B cell (primary cell): ENCODE measurements at regions of chr2 and their contacts with region 1.

Region 1: DNA sequence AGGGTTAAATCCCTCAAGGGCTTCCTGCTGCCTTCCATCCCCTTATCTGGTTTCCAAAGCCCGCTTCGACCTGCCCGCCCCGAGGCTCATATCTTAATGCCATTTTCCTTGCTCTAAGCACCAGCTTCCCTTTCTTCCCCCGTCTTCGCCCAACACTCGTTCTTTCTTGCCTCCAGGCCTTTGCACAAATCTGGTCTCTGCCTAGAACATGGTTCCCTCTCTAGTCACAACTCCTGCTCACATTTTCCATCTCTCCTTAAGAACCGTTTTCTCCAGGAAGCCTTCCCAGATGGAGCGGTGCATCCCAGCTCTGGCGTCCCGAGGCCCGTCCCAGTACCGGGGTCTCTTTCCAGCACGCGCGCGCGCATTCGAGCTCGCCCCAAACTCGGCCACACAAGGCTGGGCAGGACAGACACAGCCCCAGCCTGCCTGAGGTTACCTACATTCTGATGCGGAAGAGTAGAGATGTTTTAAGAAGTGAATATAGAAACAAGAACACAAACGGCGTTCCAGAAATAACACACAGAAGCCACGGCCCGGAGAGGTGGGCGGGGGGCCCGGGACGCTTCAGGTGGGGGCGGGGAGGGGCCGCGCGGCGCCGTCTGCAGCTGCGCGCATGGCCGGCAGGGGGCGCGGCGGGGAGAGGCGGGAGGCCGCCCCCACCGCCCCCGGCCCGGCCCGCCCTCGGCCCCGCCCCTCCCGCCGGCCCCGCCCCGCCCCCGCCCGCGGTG is at the start of gene DGKD:
- DNase-seq: peak; percentile 90
- ATAC-seq: peak; percentile 77
- H3K4me3 ChIP-seq: peak within 1 kb of the TSS; percentile 82 to 89 (median 83)
- H3K4me3 Mint-ChIP-seq: peak within 1 kb of the TSS; percentile 96
- H3K27ac ChIP-seq: peak within 1 kb of the TSS; percentile 89 to 97
- H3K27ac Mint-ChIP-seq: peak within 1 kb of the TSS; percentile 96
- H3K4me1 ChIP-seq: peaks cover 79 to 85% of the 10 kb centered on the region in 2 donors
- H3K4me1 Mint-ChIP-seq: peaks cover 86% of the 10 kb centered on the region
- H3K27me3 ChIP-seq: no peaks in the 10 kb centered on the region
- H3K27me3 Mint-ChIP-seq: no peaks in the 10 kb centered on the region
- CTCF ChIP-seq: peak; percentile 14
- total RNA-seq, gene DGKD: 396 and 397 TPM in 2 replicates

Region 2: DNA sequence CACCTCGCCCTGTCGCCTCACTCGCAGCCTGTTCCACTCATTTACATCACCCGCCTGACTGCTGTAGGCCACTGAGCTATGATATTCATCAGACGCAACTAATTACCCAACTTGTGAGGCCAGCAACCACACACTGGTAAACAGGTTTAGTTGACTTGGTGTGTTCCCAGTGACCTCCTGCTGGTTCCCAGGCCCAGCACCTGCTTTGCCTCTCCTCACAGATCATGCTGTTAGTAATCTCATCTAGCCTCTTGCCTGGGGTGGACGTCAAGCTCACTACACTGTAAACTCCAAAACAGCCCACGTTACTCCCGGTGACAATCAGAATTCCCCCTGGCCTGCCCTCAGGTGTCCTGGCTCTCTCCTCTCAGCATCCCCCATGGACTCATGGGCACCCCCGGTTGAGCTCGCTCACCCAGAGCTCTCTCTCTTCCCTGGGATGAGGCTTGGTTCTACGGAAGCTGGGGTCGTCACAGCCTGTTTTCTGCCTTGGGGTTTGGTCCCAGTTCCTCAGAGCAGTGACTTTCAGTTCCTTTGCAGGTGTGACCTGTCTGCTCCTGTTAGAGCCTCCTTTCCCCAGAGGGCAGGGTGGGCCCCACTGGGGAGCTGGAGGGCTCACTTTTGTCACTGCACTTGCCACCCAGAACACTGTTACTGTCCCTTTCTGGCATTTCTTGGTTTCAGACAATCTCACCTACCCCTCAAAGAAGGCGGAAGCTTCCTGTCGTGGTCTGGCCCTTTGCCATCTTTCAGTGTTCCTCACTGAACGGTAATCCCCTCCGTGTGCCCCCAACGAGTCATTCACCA is 253.5 kb before region 1 on chr2:
- CTCF ChIA-PET with region 1: no interaction called
- POLR2A ChIA-PET with region 1: no interaction called
- intact Hi-C with region 1: loop called (anchors 10 kb)
- DNase-seq: peak; percentile 93
- ATAC-seq: peak; percentile 86
- H3K4me3 ChIP-seq: peak overlapping the region in 4 of 5 experiments; percentile 18 to 55 (median 40)
- H3K4me3 Mint-ChIP-seq: peak overlapping the region; percentile 83
- H3K27ac ChIP-seq: peak overlapping the region; percentile 96 to 98
- H3K27ac Mint-ChIP-seq: peak overlapping the region; percentile 97
- H3K4me1 ChIP-seq: peaks cover 79 to 83% of the 10 kb centered on the region in 2 donors
- H3K4me1 Mint-ChIP-seq: peaks cover 80% of the 10 kb centered on the region
- H3K27me3 ChIP-seq: no peaks in the 10 kb centered on the region
- H3K27me3 Mint-ChIP-seq: no peaks in the 10 kb centered on the region
- CTCF ChIP-seq: no peak

Region 3: GRCh38 chr2:233323851-233324250 is 30.1 kb before region 1 on chr2:
- CTCF ChIA-PET with region 1: interaction called, 10 read pairs
- POLR2A ChIA-PET with region 1: interaction called, 10 read pairs
- intact Hi-C with region 1: loop called (anchors 5 kb)
- DNase-seq: no peak
- ATAC-seq: no peak
- H3K4me3 ChIP-seq: no peak overlapping the region
- H3K4me3 Mint-ChIP-seq: no peak overlapping the region
- H3K27ac ChIP-seq: no peak overlapping the region
- H3K27ac Mint-ChIP-seq: no peak overlapping the region
- H3K4me1 ChIP-seq: peaks cover 36 to 57% of the 10 kb centered on the region in 2 donors
- H3K4me1 Mint-ChIP-seq: peaks cover 50% of the 10 kb centered on the region
- H3K27me3 ChIP-seq: no peaks in the 10 kb centered on the region
- H3K27me3 Mint-ChIP-seq: no peaks in the 10 kb centered on the region
- CTCF ChIP-seq: no peak

Region 4: GRCh38 chr2:233371641-233372040 is 17.7 kb after region 1 on chr2:
- CTCF ChIA-PET with region 1: interaction called, 4 read pairs
- POLR2A ChIA-PET with region 1: interaction called, 6 read pairs
- intact Hi-C with region 1: loop called (anchors 2 kb)
- DNase-seq: no peak
- ATAC-seq: no peak
- H3K4me3 ChIP-seq: no peak overlapping the region
- H3K4me3 Mint-ChIP-seq: no peak overlapping the region
- H3K27ac ChIP-seq: peak overlapping the region in 1 of 2 donors; percentile 11
- H3K27ac Mint-ChIP-seq: no peak overlapping the region
- H3K4me1 ChIP-seq: peaks cover 58 to 66% of the 10 kb centered on the region in 2 donors
- H3K4me1 Mint-ChIP-seq: peaks cover 69% of the 10 kb centered on the region
- H3K27me3 ChIP-seq: no peaks in the 10 kb centered on the region
- H3K27me3 Mint-ChIP-seq: no peaks in the 10 kb centered on the region
- CTCF ChIP-seq: no peak

Region 5: DNA sequence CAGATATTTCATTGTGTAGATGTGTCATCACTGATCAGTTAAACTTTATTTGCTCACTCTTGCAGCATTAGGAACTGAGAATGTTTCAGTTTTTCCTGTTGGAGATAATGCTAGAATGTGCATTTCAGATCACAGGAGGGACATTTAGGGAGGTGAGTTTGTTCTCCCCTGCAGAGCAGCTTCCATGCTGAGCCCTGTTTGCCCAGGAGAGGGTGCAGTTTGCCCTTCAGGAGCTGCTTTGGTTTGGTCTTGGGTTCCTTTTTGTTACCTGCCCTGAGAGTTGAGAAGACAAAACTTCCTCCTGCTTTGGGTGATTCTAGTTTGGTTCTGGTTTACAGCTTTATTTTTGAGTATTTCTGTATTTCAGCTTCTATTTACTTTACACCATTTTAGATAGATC is 50.3 kb after region 1 on chr2:
- CTCF ChIA-PET with region 1: interaction called, 10 read pairs
- POLR2A ChIA-PET with region 1: no interaction called
- intact Hi-C with region 1: no loop called
- DNase-seq: peak; percentile 82
- ATAC-seq: peak; percentile 89
- H3K4me3 ChIP-seq: no peak overlapping the region
- H3K4me3 Mint-ChIP-seq: no peak overlapping the region
- H3K27ac ChIP-seq: peak overlapping the region in 1 of 2 donors; percentile 69
- H3K27ac Mint-ChIP-seq: peak overlapping the region; percentile 82
- H3K4me1 ChIP-seq: peaks cover 25 to 28% of the 10 kb centered on the region in 2 donors
- H3K4me1 Mint-ChIP-seq: peaks cover 46% of the 10 kb centered on the region
- H3K27me3 ChIP-seq: no peaks in the 10 kb centered on the region
- H3K27me3 Mint-ChIP-seq: no peaks in the 10 kb centered on the region
- CTCF ChIP-seq: peak; percentile 88

Region 6: GRCh38 chr2:233443468-233444183 is 89.7 kb after region 1 on chr2:
- CTCF ChIA-PET with region 1: interaction called, 24 read pairs
- POLR2A ChIA-PET with region 1: interaction called, 3 read pairs
- intact Hi-C with region 1: loop called (anchors 1 kb)
- DNase-seq: peak; percentile 85
- ATAC-seq: peak; percentile 84
- H3K4me3 ChIP-seq: no peak overlapping the region
- H3K4me3 Mint-ChIP-seq: no peak overlapping the region
- H3K27ac ChIP-seq: peak overlapping the region in 1 of 2 donors; percentile 28
- H3K27ac Mint-ChIP-seq: peak overlapping the region; percentile 80
- H3K4me1 ChIP-seq: peaks cover 5 to 8% of the 10 kb centered on the region in 2 donors
- H3K4me1 Mint-ChIP-seq: peaks cover 19% of the 10 kb centered on the region
- H3K27me3 ChIP-seq: no peaks in the 10 kb centered on the region
- H3K27me3 Mint-ChIP-seq: no peaks in the 10 kb centered on the region
- CTCF ChIP-seq: peak; percentile 87